ENCODE measurements at regions of chr17 and their contacts with region 1.

Region 1: DNA sequence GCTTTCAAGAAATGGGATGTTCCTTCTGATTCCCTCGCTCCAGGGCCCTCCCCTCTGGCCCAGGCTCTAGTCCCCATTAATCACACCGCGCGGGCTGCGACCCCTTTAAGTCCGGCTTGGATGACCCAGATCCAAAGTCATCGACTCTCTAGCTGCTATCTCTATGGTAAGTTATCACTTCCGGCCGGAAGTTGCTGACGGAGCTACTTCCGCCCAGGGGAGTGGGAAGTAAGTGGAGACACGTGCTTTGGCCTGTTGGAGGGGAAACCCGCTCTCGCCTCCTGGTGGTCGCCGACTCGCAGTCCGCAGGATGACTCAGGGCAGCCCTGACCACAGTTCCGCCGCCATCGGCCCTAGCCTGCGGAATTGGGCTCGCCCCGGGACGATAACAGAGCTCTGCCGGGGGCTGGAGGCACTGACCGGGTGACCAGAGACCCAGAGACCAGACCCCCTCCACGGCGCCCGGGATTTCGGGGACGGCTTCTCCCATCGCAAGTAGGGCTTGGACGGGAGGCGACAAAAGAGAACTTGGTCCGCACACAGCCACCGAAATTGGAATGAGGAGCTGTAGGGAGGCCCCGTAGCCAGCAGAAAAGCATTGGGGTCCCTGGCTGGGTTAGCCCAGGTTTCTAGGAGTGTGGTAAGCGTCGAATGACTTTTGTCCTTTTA is 52.2 kb upstream of the SEC14L1 start:
- DNase-seq: peak; percentile 99
- ATAC-seq: peak; percentile 81
- H3K4me3 ChIP-seq: peak overlapping the region; percentile 83 to 100
- H3K27ac ChIP-seq: peak overlapping the region; percentile 89
- H3K4me1 ChIP-seq: peaks cover 15 to 34% of the 10 kb centered on the region in 2 experiments
- H3K27me3 ChIP-seq: no peaks in the 10 kb centered on the region
- CTCF ChIP-seq: peak; percentile 51 to 70 (median 59); a peak in 5 of 6 replicates
- POLR2A ChIP-seq: peak; percentile 69
- RAD21 ChIP-seq: peak; percentile 49

Region 2: DNA sequence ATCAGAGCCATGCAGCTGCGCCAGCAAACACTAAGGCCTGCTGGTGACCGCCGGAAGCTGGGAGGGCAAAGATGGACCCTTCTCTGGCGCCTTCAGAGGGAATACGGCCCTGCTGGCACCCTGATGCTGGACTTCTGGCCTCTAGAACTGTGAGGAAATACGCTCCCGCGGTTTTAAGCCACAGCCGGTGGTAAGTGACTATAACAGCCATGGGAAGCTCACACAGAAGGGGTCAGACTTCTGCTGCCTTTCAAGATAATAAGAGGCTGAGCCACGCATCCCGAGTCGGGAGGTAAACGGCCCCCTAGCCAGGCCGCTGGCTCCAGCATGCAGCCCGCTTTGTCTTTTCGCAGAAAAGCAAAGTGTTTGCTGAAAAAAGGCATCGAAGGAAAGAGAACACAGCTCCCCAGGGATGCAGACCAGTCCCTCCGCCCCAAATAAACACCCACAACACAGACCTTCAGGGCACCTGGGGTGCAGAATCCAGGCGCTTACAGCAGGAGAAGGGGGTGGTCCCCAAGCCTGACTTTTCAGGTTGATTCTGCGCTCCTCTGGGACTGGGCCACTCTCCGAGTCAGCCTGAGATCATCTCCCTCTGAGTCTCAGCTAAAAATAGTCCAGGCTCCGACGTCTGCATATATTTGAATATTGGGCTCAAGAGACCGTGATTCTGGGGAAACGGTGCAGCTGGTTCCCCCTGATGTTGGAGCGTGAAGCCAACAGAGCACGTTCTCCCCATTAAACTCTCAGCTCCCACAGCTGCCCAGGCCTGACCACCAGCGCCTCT is 130.7 kb before region 1 on chr17:
- CTCF ChIA-PET with region 1: no interaction called
- POLR2A ChIA-PET with region 1: no interaction called
- RAD21 ChIA-PET with region 1: no interaction called
- intact Hi-C with region 1: no loop called
- DNase-seq: no peak
- ATAC-seq: no peak
- H3K4me3 ChIP-seq: no peak overlapping the region
- H3K27ac ChIP-seq: no peak overlapping the region
- H3K4me1 ChIP-seq: no peaks in the 10 kb centered on the region
- H3K27me3 ChIP-seq: no peaks in the 10 kb centered on the region; the same call in 1 of the 2 replicates
- CTCF ChIP-seq: no peak
- POLR2A ChIP-seq: no peak
- RAD21 ChIP-seq: no peak

Region 3: DNA sequence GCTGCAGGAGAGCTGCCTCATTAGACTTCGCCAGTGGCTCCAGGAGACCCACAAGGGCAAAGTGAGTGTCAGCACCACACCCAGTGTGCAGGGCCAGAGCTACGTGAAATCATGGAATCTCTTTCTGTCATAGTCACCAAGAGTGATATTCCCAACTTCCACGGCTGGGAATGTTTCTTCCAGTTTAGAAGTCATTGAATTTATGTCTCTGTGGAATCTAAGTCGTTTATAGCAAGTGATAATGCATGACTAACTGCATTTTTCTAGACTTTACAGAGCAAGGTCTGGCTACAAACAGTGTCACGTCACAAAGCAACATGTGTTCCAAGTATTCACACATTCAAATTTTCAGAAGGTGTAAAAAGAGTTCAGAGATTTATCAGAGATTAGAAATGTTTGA is 107.7 kb after region 1 on chr17:
- CTCF ChIA-PET with region 1: no interaction called
- POLR2A ChIA-PET with region 1: no interaction called
- RAD21 ChIA-PET with region 1: no interaction called
- intact Hi-C with region 1: loop called (anchors 5 kb)
- DNase-seq: no peak
- ATAC-seq: no peak
- H3K4me3 ChIP-seq: no peak overlapping the region
- H3K27ac ChIP-seq: no peak overlapping the region
- H3K4me1 ChIP-seq: no peaks in the 10 kb centered on the region
- H3K27me3 ChIP-seq: no peaks in the 10 kb centered on the region
- CTCF ChIP-seq: no peak
- POLR2A ChIP-seq: no peak
- RAD21 ChIP-seq: no peak

Region 4: DNA sequence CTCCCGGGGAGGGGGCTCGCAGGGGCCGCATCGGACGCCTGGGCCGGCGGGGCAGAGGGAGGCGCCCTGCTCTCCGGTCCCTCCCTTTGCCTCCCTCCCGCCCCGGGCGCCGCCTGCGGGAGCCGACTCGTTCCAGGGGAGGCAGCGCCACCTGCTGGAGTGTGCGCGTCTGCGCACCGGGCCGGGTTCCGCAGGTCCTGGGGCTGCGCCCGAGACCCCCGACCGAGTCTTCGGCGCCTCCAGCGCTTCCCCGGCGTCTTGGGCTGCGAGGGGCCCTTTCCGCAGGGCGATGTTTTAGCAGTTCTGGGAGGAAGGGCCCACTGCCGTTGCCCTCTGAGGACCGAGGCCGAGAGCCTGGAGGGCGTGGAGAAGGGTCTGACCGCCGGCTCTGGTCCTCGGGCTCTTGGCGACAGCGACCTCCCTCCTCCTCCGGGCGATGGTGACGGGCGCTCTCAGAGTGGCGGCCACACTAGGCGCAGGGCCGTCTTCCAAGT is 158.5 kb after region 1 on chr17:
- CTCF ChIA-PET with region 1: interaction called, 8 read pairs
- POLR2A ChIA-PET with region 1: interaction called, 4 read pairs
- RAD21 ChIA-PET with region 1: no interaction called
- intact Hi-C with region 1: loop called (anchors 1 kb)
- DNase-seq: peak; percentile 60
- ATAC-seq: peak; percentile 96
- H3K4me3 ChIP-seq: peak overlapping the region; percentile 38 to 53
- H3K27ac ChIP-seq: no peak overlapping the region; the same call in 1 of the 2 replicates
- H3K4me1 ChIP-seq: peaks cover 0 to 16% of the 10 kb centered on the region in 2 experiments; a peak in 1 of 4 replicates
- H3K27me3 ChIP-seq: no peaks in the 10 kb centered on the region
- CTCF ChIP-seq: peak; percentile 90 to 97 (median 91)
- POLR2A ChIP-seq: no peak
- RAD21 ChIP-seq: peak; percentile 96

Region 5: GRCh38 chr17:77476931-77477877 is 388.6 kb after region 1 on chr17:
- CTCF ChIA-PET with region 1: no interaction called
- POLR2A ChIA-PET with region 1: no interaction called
- RAD21 ChIA-PET with region 1: no interaction called
- intact Hi-C with region 1: loop called (anchors 5 kb)
- DNase-seq: no peak
- ATAC-seq: no peak
- H3K4me3 ChIP-seq: no peak overlapping the region
- H3K27ac ChIP-seq: no peak overlapping the region
- H3K4me1 ChIP-seq: peaks cover 32 to 64% of the 10 kb centered on the region in 2 experiments
- H3K27me3 ChIP-seq: no peaks in the 10 kb centered on the region
- CTCF ChIP-seq: no peak
- POLR2A ChIP-seq: no peak
- RAD21 ChIP-seq: no peak

Measured in HCT116 (cell line).